Naive thymus-derived CD4-positive, alpha-beta T cell (primary cell): ENCODE measurements at regions of chr15 and their contacts with region 1.

Region 1: GRCh38 chr15:96330450-96331145 is at the start of gene NR2F2:
- DNase-seq: peak in 6 of 9 donors; percentile 9 to 31 (median 18)
- ATAC-seq: peak; percentile 75
- H3K4me3 ChIP-seq: peak within 1 kb of the TSS; percentile 44
- H3K4me3 Mint-ChIP-seq: peak within 1 kb of the TSS; percentile 82 to 92 (median 88)
- H3K27ac ChIP-seq: no peak within 1 kb of the TSS
- H3K27ac Mint-ChIP-seq: peak within 1 kb of the TSS in 4 of 9 donors; percentile 32 to 87 (median 84)
- H3K4me1 ChIP-seq: peaks cover 0 to 3% of the 10 kb centered on the region in 2 donors
- H3K4me1 Mint-ChIP-seq: peaks cover 17 to 48% (median 27%) of the 10 kb centered on the region in 7 donors
- H3K27me3 ChIP-seq: peaks cover 0 to 43% of the 10 kb centered on the region in 2 donors
- H3K27me3 Mint-ChIP-seq: peaks cover 69 to 88% (median 83%) of the 10 kb centered on the region in 5 donors
- total RNA-seq, gene NR2F2: not detected

Region 2: GRCh38 chr15:96345560-96346399 is 15.2 kb after region 1 on chr15:
- CTCF ChIA-PET with region 1: no interaction called
- POLR2A ChIA-PET with region 1: no interaction called
- intact Hi-C with region 1: loop called in 1 of 2 experiments (anchors 2 kb)
- DNase-seq: no peak
- ATAC-seq: peak; percentile 38
- H3K4me3 ChIP-seq: no peak overlapping the region
- H3K4me3 Mint-ChIP-seq: peak overlapping the region in 3 of 10 donors; percentile 5 to 43 (median 25)
- H3K27ac ChIP-seq: no peak overlapping the region
- H3K27ac Mint-ChIP-seq: peak overlapping the region in 1 of 9 donors; percentile 58
- H3K4me1 ChIP-seq: no peaks in the 10 kb centered on the region
- H3K4me1 Mint-ChIP-seq: peaks cover 4 to 27% (median 13%) of the 10 kb centered on the region in 7 donors
- H3K27me3 ChIP-seq: peaks cover 0 to 44% of the 10 kb centered on the region in 2 donors
- H3K27me3 Mint-ChIP-seq: peaks cover 92 to 99% (median 96%) of the 10 kb centered on the region in 5 donors

Region 3: DNA sequence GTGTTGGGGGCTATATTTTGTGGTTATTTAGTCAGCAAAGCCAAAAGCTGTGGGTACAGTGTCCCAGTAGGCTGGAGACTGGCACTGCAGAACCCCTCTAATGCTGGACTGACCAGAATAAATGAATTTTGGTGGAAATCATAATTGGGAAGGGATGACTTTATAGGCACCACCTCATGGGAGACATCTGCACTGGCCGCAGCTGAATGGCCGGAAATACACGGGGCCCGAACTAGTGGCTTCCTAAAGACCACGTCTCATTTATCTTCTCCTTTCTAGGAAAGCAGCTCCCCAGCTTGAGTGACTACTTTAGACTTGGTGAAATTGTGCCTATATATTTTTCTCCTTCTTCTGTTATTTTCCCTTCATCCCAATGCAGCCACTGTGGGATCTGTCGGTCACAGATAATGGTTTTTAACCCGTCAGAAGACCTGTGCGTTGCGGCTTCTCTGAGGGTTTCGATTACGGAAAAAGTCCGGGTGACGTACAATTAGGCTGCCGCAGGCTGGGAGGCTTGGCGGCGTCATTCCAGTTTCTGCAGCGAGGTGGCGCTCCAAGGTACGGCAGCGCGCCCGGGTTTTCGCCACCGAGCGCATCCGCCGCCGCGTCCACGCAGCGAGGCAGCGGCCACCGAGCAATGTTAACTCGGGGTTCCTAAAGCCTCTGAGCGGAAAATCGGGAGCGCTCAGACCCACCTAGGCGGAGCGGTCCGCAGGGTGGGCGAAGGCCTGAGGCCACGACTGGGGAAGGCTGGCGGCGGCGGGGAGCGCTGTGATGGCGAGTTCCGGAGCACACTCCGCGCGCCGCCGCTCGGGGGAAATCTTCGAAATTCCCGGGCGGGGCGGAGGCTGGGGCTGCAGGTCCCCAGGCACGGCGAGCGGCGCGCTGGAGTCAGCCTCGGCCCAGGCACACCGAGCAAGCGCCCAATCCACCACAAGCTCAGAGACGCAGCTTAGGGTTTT is 26.2 kb after region 1 on chr15:
- CTCF ChIA-PET with region 1: no interaction called
- POLR2A ChIA-PET with region 1: no interaction called
- intact Hi-C with region 1: loop called in 1 of 2 experiments (anchors 2 kb)
- DNase-seq: peak; percentile 28 to 85 (median 62)
- ATAC-seq: peak; percentile 80
- H3K4me3 ChIP-seq: peak overlapping the region; percentile 42
- H3K4me3 Mint-ChIP-seq: peak overlapping the region; percentile 84 to 91 (median 88)
- H3K27ac ChIP-seq: no peak overlapping the region
- H3K27ac Mint-ChIP-seq: peak overlapping the region in 6 of 9 donors; percentile 51 to 81 (median 72)
- H3K4me1 ChIP-seq: peaks cover 7 to 11% of the 10 kb centered on the region in 2 donors
- H3K4me1 Mint-ChIP-seq: peaks cover 18 to 45% (median 34%) of the 10 kb centered on the region in 7 donors
- H3K27me3 ChIP-seq: peaks cover 23 to 53% of the 10 kb centered on the region in 2 donors
- H3K27me3 Mint-ChIP-seq: peaks cover 52 to 64% (median 58%) of the 10 kb centered on the region in 5 donors

Region 4: DNA sequence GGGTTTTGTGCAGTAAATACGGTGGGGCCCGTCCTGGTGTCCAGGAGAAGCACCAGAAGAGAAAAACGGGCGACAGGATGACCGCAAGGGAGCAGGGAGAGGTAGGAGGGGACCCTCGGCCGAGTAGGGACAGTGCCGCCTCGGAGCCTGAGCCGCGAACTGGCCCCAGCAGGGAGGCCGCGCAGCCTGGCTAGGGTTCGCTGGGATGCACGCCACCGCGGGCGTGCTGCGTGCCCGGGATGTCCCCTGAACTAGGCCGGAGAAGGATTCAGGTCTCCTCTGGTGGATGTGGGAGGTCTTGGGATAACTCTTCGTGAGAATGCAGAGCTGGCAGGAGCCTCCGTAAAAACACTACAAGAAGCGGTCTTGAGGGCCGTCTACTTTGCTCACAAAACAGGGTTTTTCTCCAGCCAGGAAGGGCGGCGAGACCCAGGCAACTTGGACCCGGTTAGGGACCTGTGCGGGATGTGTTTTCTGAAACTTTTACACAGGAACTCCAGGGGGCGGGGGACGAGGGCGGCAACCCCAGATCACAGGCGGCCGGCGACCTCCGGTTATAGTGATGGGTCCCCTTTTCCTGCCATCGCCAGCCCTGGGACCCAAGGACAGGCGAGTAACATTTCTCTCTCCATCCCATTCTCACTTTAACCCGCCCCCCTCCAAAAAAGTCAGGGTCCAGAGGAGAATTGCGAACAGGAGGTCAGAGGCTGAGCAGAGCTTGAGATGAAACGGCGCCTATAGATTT is 35.4 kb after region 1 on chr15:
- CTCF ChIA-PET with region 1: no interaction called
- POLR2A ChIA-PET with region 1: no interaction called
- intact Hi-C with region 1: loop called in 1 of 2 experiments (anchors 2 kb)
- DNase-seq: no peak
- ATAC-seq: no peak
- H3K4me3 ChIP-seq: no peak overlapping the region
- H3K4me3 Mint-ChIP-seq: peak overlapping the region in 1 of 10 donors; percentile 23
- H3K27ac ChIP-seq: no peak overlapping the region
- H3K27ac Mint-ChIP-seq: peak overlapping the region in 1 of 9 donors; percentile 33
- H3K4me1 ChIP-seq: no peaks in the 10 kb centered on the region
- H3K4me1 Mint-ChIP-seq: peaks cover 0 to 5% (median 0%) of the 10 kb centered on the region in 7 donors
- H3K27me3 ChIP-seq: peaks cover 3 to 10% of the 10 kb centered on the region in 2 donors
- H3K27me3 Mint-ChIP-seq: peaks cover 80 to 92% (median 82%) of the 10 kb centered on the region in 5 donors

Region 5: DNA sequence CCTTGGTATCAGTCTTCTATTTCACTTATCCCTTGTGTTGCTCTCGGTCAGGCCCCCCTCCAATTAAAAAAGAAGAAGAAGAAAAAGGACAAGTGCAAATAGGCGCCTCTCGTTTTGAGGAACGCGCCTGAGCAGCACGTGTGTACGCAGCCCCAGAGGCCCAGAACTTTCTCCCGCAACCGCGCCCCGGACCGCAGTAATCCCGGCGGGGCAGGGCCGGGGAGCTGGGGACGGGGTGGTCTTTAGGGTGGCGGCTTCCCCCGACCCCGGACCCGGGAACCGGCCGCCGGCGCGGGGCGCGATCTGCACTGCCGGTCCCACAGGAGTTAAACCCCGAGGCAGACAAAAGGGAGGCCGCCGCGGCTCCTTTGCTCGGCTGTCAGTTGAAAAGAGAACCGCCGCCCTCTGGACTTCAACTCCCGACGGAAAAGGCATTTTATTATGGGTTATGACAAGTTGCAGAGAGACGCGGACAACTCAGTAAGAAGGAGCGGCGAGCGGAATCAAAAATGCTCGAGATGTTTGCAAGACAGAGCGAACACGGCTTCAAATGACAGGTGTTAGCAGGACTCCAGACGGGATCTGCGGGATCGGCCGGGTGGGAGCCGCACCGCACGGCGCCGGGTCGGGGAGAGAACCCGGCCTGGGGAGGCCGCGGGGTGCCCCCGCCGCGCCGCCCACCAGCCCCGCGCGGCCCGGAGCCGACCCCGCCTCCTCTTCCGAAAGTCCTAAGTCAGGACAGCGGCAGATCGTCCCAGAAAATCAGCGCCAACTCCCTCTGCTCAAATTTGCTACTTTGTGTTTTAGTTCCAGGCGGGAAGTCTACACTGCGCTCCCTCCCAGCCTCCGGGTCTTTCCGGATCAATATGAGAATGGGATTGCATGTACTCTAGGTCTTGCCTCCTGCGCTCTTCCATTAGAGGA is 78.9 kb after region 1 on chr15:
- CTCF ChIA-PET with region 1: no interaction called
- POLR2A ChIA-PET with region 1: no interaction called
- intact Hi-C with region 1: loop called in 1 of 2 experiments (anchors 2 kb)
- DNase-seq: no peak
- ATAC-seq: no peak
- H3K4me3 ChIP-seq: no peak overlapping the region
- H3K4me3 Mint-ChIP-seq: peak overlapping the region in 3 of 10 donors; percentile 26 to 57 (median 39)
- H3K27ac ChIP-seq: no peak overlapping the region
- H3K27ac Mint-ChIP-seq: peak overlapping the region in 1 of 9 donors; percentile 74
- H3K4me1 ChIP-seq: no peaks in the 10 kb centered on the region
- H3K4me1 Mint-ChIP-seq: peaks cover 0 to 14% (median 8%) of the 10 kb centered on the region in 7 donors
- H3K27me3 ChIP-seq: peaks cover 3 to 22% of the 10 kb centered on the region in 2 donors
- H3K27me3 Mint-ChIP-seq: peaks cover 76 to 87% (median 84%) of the 10 kb centered on the region in 5 donors

Region 6: GRCh38 chr15:96416934-96417759 is 86.5 kb after region 1 on chr15:
- CTCF ChIA-PET with region 1: no interaction called
- POLR2A ChIA-PET with region 1: no interaction called
- intact Hi-C with region 1: loop called in 1 of 2 experiments (anchors 2 kb)
- DNase-seq: no peak
- ATAC-seq: no peak
- H3K4me3 ChIP-seq: no peak overlapping the region
- H3K4me3 Mint-ChIP-seq: peak overlapping the region in 1 of 10 donors; percentile 28
- H3K27ac ChIP-seq: no peak overlapping the region
- H3K27ac Mint-ChIP-seq: peak overlapping the region in 1 of 9 donors; percentile 10
- H3K4me1 ChIP-seq: no peaks in the 10 kb centered on the region
- H3K4me1 Mint-ChIP-seq: peaks cover 0 to 6% (median 4%) of the 10 kb centered on the region in 7 donors
- H3K27me3 ChIP-seq: no peaks in the 10 kb centered on the region
- H3K27me3 Mint-ChIP-seq: peaks cover 69 to 90% (median 75%) of the 10 kb centered on the region in 5 donors

Region 7: GRCh38 chr15:97234851-97235610 is 904.4 kb after region 1 on chr15:
- CTCF ChIA-PET with region 1: no interaction called
- POLR2A ChIA-PET with region 1: no interaction called
- intact Hi-C with region 1: loop called in 1 of 2 experiments (anchors 10 kb)
- DNase-seq: peak in 6 of 9 donors; percentile 2 to 25 (median 12)
- ATAC-seq: no peak
- H3K4me3 ChIP-seq: no peak overlapping the region
- H3K4me3 Mint-ChIP-seq: no peak overlapping the region
- H3K27ac ChIP-seq: no peak overlapping the region
- H3K27ac Mint-ChIP-seq: no peak overlapping the region
- H3K4me1 ChIP-seq: no peaks in the 10 kb centered on the region
- H3K4me1 Mint-ChIP-seq: peaks cover 0 to 6% (median 0%) of the 10 kb centered on the region in 7 donors
- H3K27me3 ChIP-seq: no peaks in the 10 kb centered on the region
- H3K27me3 Mint-ChIP-seq: peaks cover 0 to 28% (median 17%) of the 10 kb centered on the region in 5 donors